Activated T-helper 1 cell treated with anti-CD3 and anti-CD28 coated beads, Interleukin-12 subunit alpha, Interleukin-12 subunit beta, Interleukin-2, Interleukin-4 antibody, amounts not matched to agents 30 ng/mL and 10 ng/mL and 1 ng/mL, durations not matched to agents 14 hours and 24 hours and 36 hours (primary cell): ENCODE measurements at regions of chr21 and their contacts with region 1.

Region 1: DNA sequence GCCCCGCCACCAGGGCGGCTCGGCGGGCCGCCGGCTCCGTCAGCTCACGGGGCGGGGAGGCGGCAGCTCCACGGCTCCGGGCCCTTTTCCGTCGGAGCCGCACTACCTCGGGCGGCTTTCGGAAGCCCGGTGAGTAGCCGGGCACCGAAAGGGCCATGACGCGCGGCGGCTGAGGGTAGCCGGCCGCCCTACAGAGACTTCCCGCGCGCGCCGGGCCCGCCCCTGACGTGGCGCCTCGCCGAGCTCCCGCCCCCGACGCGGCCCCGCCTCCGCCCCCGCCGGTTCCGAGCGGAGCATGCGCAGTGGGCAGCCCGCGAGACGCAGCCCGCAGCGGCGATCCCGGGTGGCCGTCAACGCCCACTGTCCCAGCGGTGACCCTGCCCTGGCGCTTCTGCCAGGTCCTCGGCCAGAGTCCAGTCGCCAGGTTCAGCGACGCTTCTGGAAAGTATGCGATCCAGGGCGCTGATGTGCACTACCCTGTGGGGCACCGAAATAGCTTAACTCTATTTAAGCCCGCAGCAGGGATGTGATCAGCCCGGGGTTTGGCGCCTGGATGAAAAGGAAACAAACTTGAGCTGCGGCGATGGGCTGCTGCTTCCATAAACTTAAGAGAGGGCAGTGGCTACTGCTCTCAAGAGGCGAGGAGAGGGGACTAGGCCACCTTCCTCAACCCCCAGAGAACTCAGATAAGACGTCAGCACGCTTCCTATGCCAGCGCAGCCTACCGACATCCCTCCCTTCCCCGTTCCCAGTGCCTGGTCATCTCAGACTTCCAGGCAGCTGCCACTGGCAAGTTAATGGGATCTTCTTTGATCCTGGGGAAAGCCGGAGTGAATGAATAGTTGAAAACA is at the start of gene DONSON:
- DNase-seq: peak; percentile 90
- H3K4me3 Mint-ChIP-seq: peak within 1 kb of the TSS; percentile 92
- H3K27ac Mint-ChIP-seq: peak within 1 kb of the TSS; percentile 84
- H3K4me1 Mint-ChIP-seq: peaks cover 31% of the 10 kb centered on the region
- H3K27me3 Mint-ChIP-seq: no peaks in the 10 kb centered on the region
- total RNA-seq, gene DONSON: 37.5 and 38.7 TPM in 2 replicates

Region 2: DNA sequence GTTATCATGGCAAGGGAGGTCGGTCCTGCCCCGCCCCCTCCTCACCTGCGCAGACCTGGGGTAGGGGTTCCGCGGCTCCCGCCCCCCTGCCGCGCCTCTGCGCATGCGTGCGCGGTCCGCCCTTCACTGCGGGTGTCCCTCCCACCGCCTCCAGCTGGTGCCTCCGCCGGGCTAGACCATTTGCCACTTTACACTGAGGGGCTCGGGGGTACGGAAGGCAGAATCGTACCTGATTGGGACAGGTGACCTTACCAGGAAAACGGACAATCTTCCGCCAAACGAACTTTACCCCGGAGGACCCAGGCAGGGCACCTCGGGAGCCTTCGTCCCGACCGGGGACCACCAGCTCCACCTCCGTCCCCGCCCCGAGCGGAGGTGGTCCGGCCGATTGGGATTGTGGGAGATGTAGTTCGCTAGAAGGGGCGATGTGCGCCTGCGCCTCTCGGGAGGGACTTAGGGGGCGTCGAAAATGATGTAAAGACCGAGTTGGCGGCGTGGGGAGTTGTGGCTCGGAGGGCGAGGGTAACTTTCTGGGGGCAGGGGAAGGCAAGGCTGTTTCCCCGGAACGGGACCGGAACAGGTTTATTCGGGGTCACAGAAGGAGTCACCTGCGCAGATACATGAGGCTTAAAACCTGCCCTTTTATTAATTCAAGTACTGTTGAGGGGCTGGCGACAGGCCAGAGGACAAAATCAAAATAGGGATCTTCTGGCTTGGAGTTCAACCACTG is 97.2 kb before region 1 on chr21 and contains the start of gene DNAJC28:
- intact Hi-C with region 1: loop called (anchors 1 kb)
- DNase-seq: peak; percentile 91
- H3K4me3 Mint-ChIP-seq: peak within 1 kb of the TSS; percentile 84
- H3K27ac Mint-ChIP-seq: peak within 1 kb of the TSS; percentile 74
- H3K4me1 Mint-ChIP-seq: peaks cover 11% of the 10 kb centered on the region
- H3K27me3 Mint-ChIP-seq: peaks cover 12% of the 10 kb centered on the region
- total RNA-seq, gene DNAJC28: 0.12 and 0.18 TPM in 2 replicates

Region 3: DNA sequence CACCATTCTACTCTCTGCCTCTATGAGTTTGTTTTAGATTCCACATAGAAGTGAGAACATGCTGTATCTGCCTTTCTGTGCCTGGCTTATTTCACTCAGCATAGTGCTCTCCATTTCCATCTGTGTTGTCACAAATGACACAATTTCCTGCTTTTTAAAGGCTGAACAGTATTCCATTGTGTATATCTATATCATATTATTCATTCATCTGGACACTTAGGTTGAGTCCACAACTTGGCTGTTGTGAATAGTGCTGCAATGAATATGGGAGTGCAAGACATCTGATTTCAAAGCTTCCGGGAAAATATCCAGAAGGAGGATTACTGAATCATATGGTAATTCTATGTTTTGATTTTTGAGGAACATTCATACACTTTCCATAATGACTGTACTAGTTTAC is 19.8 kb after region 1 on chr21:
- intact Hi-C with region 1: loop called (anchors 2 kb)
- DNase-seq: no peak
- H3K4me3 Mint-ChIP-seq: no peak overlapping the region
- H3K27ac Mint-ChIP-seq: no peak overlapping the region
- H3K4me1 Mint-ChIP-seq: no peaks in the 10 kb centered on the region
- H3K27me3 Mint-ChIP-seq: no peaks in the 10 kb centered on the region